ENCODE measurements at regions of chr9 and their contacts with region 1.

Region 1: DNA sequence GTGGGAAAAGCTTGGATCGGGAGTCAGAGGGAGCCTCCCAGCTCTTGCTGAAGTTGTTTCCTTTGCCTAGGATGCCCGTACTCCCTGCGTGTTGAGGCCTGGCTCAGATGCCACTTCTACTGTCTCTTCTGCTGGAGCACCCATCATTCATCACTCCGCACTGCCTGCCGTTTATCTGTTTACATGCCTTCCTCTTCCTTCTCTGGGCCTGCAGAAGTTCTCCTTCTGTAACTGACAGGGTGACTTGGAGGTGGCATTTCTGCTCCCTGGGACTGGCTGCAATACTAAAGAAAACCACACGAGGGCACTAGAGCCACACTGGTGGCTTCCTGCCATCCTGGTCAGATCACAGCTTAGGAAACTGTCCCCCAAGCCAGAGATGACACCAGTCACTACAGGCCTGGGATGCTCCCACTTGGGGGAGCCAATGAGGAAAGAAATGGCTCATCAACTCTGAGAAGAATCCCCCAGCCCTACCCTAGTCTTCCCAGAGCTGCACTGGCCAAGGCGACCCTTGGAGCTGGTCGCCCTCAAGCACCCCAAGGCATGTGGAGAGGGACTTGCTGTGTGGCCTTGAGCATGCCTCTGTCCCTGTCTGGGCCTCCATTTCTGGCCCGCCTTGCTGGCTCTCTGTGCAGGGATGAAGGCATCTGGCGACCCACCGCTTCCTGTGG is 9.7 kb upstream of the SLC25A51 start:
- DNase-seq: peak; percentile 90
- H3K4me3 ChIP-seq: no peak overlapping the region; a peak in 1 of 4 replicates
- H3K27ac ChIP-seq: peak overlapping the region; percentile 30 to 48; a peak in 3 of 4 replicates
- H3K4me1 ChIP-seq: peaks cover 5 to 7% of the 10 kb centered on the region in 2 experiments; a peak in 1 of 4 replicates
- H3K27me3 ChIP-seq: no peaks in the 10 kb centered on the region
- CTCF ChIP-seq: peak; percentile 97
- EP300 ChIP-seq: no peak
- RAD21 ChIP-seq: peak; percentile 100

Region 2: GRCh38 chr9:37956904-37957671 is 43.5 kb after region 1 on chr9:
- CTCF ChIA-PET with region 1: interaction called, 11 read pairs
- POLR2A ChIA-PET with region 1: no interaction called
- DNase-seq: no peak
- H3K4me3 ChIP-seq: no peak overlapping the region
- H3K27ac ChIP-seq: peak overlapping the region; percentile 16 to 96; a peak in 2 of 4 replicates
- H3K4me1 ChIP-seq: peaks cover 12 to 30% of the 10 kb centered on the region in 2 experiments; a peak in 3 of 4 replicates
- H3K27me3 ChIP-seq: no peaks in the 10 kb centered on the region
- CTCF ChIP-seq: no peak
- EP300 ChIP-seq: no peak
- RAD21 ChIP-seq: peak; percentile 35

Region 3: DNA sequence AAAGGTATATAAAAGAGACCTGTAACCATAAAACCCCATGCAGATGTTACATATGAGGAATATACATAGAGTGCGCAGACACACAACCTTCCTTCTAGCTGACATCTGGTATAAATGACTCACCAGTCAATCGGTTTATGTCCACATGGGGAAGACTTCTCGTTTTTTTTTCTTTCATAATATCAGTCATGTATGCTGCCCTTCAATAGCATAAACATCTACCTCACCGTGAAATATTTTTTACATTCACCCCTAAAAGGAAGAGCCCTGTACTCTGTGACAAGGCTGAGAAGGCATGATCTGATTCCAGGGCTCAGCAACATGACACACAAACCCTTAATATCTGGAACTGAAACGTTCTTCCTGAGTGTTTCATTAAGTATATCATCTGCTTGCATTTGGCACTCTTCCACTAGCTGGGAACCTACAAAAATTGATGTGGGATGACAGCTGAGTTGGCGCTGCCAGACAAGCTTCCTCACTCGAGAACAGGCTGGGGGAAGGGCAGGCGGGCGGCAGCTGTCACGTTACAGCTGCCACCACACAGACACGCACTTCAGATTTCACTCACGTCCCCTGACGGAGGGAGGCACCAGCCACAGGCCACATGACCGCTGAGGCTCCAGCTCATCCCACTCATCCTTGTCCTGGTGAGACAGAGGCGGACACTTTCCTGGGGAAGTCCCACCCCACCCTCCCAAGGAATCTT is 81.2 kb after region 1 on chr9:
- CTCF ChIA-PET with region 1: interaction called, 15 read pairs
- POLR2A ChIA-PET with region 1: no interaction called
- DNase-seq: peak; percentile 58
- H3K4me3 ChIP-seq: peak overlapping the region in 1 of 2 experiments; percentile 3; a peak in 1 of 4 replicates
- H3K27ac ChIP-seq: peak overlapping the region; percentile 75 to 97
- H3K4me1 ChIP-seq: peaks cover 48 to 70% of the 10 kb centered on the region in 2 experiments; a peak in 3 of 4 replicates
- H3K27me3 ChIP-seq: no peaks in the 10 kb centered on the region
- CTCF ChIP-seq: no peak
- EP300 ChIP-seq: peak; percentile 34 to 77; a peak in 2 of 4 replicates
- RAD21 ChIP-seq: peak; percentile 37

Region 4: GRCh38 chr9:38035873-38036272 is 122.3 kb after region 1 on chr9:
- CTCF ChIA-PET with region 1: interaction called, 18 read pairs
- POLR2A ChIA-PET with region 1: no interaction called
- DNase-seq: no peak
- H3K4me3 ChIP-seq: no peak overlapping the region
- H3K27ac ChIP-seq: peak overlapping the region in 1 of 2 experiments; percentile 97; a peak in 2 of 4 replicates
- H3K4me1 ChIP-seq: peaks cover 49 to 66% of the 10 kb centered on the region in 2 experiments
- H3K27me3 ChIP-seq: no peaks in the 10 kb centered on the region
- CTCF ChIP-seq: no peak
- EP300 ChIP-seq: peak in 1 of 2 experiments; percentile 82; a peak in 1 of 4 replicates
- RAD21 ChIP-seq: no peak

Region 5: DNA sequence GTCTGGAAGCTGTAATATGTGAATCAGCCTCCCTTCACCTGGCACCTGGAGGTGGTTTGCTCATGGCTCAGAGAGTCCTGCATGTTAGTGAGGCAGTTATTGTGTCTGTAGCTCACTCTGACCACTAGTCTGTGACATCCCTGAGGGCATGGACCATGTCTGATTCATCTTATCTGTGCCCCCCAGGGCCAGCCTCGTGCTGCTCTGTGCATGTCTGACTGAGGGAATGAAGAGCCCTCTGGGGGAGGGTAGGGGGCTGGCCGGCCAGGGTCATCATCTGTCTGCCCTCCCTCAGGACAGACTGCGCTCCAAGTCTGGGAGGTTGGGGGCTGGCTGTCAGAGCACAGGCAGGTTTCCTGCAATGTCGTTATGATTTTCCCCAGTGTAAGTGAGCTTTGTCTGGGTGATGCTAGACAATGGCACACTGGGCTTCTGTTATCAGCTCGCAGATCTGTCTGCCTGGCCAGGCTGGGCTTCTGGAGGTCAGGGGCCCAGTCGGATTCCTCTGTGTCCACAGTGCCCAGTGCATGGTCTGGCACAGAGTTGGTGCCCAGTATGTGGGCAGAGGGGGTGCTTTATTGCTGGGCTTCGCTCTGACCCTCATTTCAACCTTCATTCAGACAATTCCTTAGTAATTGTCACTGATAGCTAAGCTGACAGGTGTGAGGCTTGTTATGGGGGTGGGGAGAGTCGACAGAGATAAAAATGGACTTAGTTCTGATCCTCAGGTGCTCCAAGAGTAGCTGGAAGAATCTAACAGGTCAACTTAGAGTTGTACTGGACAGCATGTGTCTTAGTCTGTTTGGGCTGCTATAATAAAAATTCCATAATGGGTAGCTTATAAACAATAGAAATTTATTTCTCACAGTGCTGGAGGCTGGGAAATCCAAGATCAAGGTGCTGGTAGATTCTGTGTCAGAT is 241.1 kb after region 1 on chr9:
- CTCF ChIA-PET with region 1: interaction called, 15 read pairs
- POLR2A ChIA-PET with region 1: no interaction called
- DNase-seq: peak; percentile 76
- H3K4me3 ChIP-seq: no peak overlapping the region
- H3K27ac ChIP-seq: peak overlapping the region in 1 of 2 experiments; percentile 98; a peak in 2 of 4 replicates
- H3K4me1 ChIP-seq: peaks cover 0 to 34% of the 10 kb centered on the region in 2 experiments; a peak in 2 of 4 replicates
- H3K27me3 ChIP-seq: no peaks in the 10 kb centered on the region
- CTCF ChIP-seq: no peak
- EP300 ChIP-seq: peak in 1 of 2 experiments; percentile 69; a peak in 1 of 4 replicates
- RAD21 ChIP-seq: peak; percentile 38

Region 6: GRCh38 chr9:38346811-38347210 is 433.2 kb after region 1 on chr9:
- CTCF ChIA-PET with region 1: interaction called, 16 read pairs
- POLR2A ChIA-PET with region 1: no interaction called
- DNase-seq: no peak
- H3K4me3 ChIP-seq: no peak overlapping the region
- H3K27ac ChIP-seq: no peak overlapping the region
- H3K4me1 ChIP-seq: peaks cover 0 to 20% of the 10 kb centered on the region in 2 experiments; a peak in 1 of 4 replicates
- H3K27me3 ChIP-seq: no peaks in the 10 kb centered on the region; the same call in 1 of the 2 replicates
- CTCF ChIP-seq: no peak
- EP300 ChIP-seq: no peak
- RAD21 ChIP-seq: no peak

Region 7: DNA sequence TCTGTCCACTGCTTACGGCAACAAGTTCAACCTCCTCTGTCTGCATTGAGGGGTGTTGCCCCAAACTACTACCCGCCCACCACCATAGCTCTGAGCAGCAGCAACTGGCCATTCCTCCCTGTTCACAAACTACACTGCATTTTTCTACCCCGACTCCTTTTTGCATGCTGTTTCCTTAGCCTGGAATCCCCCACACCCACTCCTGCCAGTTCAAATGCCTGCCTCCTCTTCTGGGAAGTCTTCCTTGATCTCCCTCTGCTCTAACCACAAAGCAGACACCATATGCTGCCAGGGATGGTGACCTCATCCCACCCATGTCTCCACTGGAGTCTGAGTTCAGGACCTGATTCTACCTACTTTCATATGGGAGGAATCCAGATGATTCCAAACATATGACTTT is 492.2 kb after region 1 on chr9:
- CTCF ChIA-PET with region 1: interaction called, 11 read pairs
- POLR2A ChIA-PET with region 1: no interaction called
- DNase-seq: no peak
- H3K4me3 ChIP-seq: no peak overlapping the region
- H3K27ac ChIP-seq: no peak overlapping the region
- H3K4me1 ChIP-seq: peaks cover 0 to 5% of the 10 kb centered on the region in 2 experiments; a peak in 1 of 4 replicates
- H3K27me3 ChIP-seq: peaks cover 4% of the 10 kb centered on the region; the same call in 1 of the 2 replicates
- CTCF ChIP-seq: no peak
- EP300 ChIP-seq: no peak
- RAD21 ChIP-seq: no peak

Measured in SK-N-SH (cell line).